GM23248 (cell line): ENCODE measurements at regions of chrX and their contacts with region 1.

Region 1: GRCh38 chrX:120015145-120016067 is 62.1 kb downstream of the RHOXF2B start:
- DNase-seq: peak; percentile 20
- H3K4me3 ChIP-seq: no peak overlapping the region
- H3K27ac ChIP-seq: no peak overlapping the region
- H3K4me1 ChIP-seq: no peaks in the 10 kb centered on the region
- H3K27me3 ChIP-seq: peaks cover 9% of the 10 kb centered on the region; the same call in 1 of the 2 replicates

Region 2: DNA sequence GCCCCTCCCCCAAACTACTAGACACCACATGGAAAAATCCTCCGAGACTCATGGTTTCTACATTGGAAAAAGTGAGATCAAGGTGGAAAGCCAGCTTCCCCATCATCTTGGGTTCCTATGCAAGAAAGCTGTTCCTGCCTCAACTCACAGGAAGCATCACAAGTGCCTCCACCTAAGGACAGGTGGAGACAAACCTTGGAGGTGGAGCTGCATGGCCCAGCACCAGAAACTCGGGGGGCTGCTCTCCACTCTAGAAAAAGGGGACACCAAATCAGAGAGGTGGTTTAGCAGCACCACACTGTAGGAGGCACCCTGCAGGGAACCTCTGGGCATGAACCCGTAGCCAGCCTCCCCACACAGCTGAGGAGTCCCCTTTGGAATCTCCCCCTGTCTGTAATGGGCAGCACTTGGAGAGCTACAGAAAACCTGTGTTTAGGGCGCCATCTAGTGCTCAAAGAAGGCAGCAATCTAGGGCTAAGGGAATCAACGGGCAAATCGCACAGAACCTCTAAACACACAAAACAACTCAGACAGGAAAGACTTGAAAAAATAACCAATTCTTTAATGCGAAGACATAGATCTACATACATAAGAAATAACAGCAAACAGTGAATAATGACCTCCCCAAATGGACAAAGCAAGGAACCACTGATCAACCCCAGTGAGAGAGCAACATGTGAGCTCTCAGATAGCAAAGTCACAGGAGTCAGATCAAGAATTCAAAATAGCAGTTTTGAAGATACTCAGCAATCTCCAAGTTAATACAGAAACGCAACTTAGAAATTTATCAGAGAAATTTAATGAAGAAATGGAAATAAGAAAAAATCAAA is 198.2 kb after region 1 on chrX:
- in situ Hi-C with region 1: loop called (anchors 25 kb)
- DNase-seq: peak; percentile 57
- H3K4me3 ChIP-seq: no peak overlapping the region
- H3K27ac ChIP-seq: no peak overlapping the region
- H3K4me1 ChIP-seq: no peaks in the 10 kb centered on the region
- H3K27me3 ChIP-seq: no peaks in the 10 kb centered on the region

Region 3: DNA sequence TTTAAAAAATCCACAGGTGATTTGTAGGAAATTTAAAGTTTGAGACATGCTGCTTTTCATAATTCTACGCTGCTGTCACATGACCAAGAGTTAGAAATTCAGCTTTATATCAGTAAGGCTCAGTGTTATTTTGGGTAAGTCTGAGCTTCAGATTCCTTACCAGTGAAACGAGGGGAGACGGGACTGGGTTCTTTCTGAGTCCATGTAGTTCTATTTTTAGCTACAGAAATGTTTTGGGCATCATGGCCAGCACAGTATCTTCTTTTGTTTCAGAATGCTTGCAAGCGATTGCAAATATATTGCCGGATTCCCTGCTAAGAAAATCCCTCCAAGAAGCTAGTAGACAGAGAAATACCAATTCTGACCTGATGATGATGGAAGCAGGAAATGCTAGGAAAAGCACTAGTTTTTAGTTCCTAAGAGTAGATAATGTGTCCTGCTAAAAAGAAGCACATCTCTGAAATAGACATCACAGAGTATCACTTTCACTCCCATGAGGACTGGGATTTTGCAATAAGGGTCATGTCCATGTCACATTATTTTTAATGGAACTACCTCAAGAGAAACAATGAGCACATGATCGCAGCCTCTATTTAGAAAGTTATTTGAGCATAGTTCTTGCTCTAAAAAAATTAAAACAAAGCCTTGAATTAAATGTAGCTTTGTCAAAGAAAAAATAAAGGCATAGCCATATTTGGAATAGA is 357.4 kb after region 1 on chrX:
- in situ Hi-C with region 1: no loop called
- DNase-seq: no peak
- H3K4me3 ChIP-seq: no peak overlapping the region
- H3K27ac ChIP-seq: no peak overlapping the region
- H3K4me1 ChIP-seq: no peaks in the 10 kb centered on the region
- H3K27me3 ChIP-seq: no peaks in the 10 kb centered on the region